Activated CD4-positive, alpha-beta T cell treated with anti-CD3 and anti-CD28 coated beads, Interleukin-2, amount 10 ng/mL, durations not matched to agents 7 days and 5 days (primary cell): ENCODE measurements at regions of chr2 and their contacts with region 1.

Region 1: DNA sequence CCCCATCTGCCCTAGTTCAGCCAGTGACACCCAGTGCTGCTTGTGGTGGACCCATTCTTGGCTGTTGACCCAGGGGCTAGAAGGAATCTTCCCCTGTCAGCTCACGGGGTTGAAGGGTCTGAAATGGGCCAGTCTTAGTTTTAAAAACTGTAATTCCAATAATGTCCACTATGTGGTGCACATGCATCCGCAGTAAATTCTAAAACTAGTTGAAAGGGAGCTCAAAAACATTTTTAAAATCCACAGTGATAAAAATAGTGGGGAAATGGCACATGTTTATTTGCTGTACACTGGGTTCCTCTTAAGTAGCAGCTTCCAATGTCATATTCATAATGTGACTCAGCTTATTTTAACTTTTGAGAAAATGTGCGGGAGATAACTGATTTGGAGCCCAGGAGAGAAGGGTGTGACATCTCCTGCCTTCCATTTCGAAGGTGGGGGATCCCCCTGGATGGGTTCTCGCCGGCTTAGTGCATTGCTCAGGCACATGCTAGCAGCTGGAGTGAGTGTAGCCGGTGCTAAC is 32.8 kb downstream of the GRHL1 start:
- DNase-seq: peak; percentile 35
- H3K4me3 Mint-ChIP-seq: no peak overlapping the region
- H3K27ac Mint-ChIP-seq: no peak overlapping the region
- H3K4me1 Mint-ChIP-seq: peaks cover 15% of the 10 kb centered on the region
- H3K27me3 Mint-ChIP-seq: peaks cover 26% of the 10 kb centered on the region

Region 2: GRCh38 chr2:9951973-9952737 is 32.1 kb before region 1 on chr2:
- CTCF ChIA-PET with region 1: no interaction called
- POLR2A ChIA-PET with region 1: interaction called, 12 read pairs
- DNase-seq: no peak
- H3K4me3 Mint-ChIP-seq: peak overlapping the region; percentile 72
- H3K27ac Mint-ChIP-seq: no peak overlapping the region
- H3K4me1 Mint-ChIP-seq: peaks cover 11% of the 10 kb centered on the region
- H3K27me3 Mint-ChIP-seq: peaks cover 52% of the 10 kb centered on the region

Region 3: GRCh38 chr2:10006236-10007161 is 22.2 kb after region 1 on chr2:
- CTCF ChIA-PET with region 1: interaction called, 10 read pairs
- POLR2A ChIA-PET with region 1: interaction called, 3 read pairs
- DNase-seq: no peak
- H3K4me3 Mint-ChIP-seq: no peak overlapping the region
- H3K27ac Mint-ChIP-seq: no peak overlapping the region
- H3K4me1 Mint-ChIP-seq: no peaks in the 10 kb centered on the region
- H3K27me3 Mint-ChIP-seq: peaks cover 27% of the 10 kb centered on the region

Region 4: GRCh38 chr2:10048501-10049171 is 64.4 kb after region 1 on chr2:
- CTCF ChIA-PET with region 1: interaction called, 18 read pairs
- POLR2A ChIA-PET with region 1: interaction called, 4 read pairs
- DNase-seq: peak; percentile 54
- H3K4me3 Mint-ChIP-seq: no peak overlapping the region
- H3K27ac Mint-ChIP-seq: no peak overlapping the region
- H3K4me1 Mint-ChIP-seq: peaks cover 19% of the 10 kb centered on the region
- H3K27me3 Mint-ChIP-seq: no peaks in the 10 kb centered on the region

Region 5: DNA sequence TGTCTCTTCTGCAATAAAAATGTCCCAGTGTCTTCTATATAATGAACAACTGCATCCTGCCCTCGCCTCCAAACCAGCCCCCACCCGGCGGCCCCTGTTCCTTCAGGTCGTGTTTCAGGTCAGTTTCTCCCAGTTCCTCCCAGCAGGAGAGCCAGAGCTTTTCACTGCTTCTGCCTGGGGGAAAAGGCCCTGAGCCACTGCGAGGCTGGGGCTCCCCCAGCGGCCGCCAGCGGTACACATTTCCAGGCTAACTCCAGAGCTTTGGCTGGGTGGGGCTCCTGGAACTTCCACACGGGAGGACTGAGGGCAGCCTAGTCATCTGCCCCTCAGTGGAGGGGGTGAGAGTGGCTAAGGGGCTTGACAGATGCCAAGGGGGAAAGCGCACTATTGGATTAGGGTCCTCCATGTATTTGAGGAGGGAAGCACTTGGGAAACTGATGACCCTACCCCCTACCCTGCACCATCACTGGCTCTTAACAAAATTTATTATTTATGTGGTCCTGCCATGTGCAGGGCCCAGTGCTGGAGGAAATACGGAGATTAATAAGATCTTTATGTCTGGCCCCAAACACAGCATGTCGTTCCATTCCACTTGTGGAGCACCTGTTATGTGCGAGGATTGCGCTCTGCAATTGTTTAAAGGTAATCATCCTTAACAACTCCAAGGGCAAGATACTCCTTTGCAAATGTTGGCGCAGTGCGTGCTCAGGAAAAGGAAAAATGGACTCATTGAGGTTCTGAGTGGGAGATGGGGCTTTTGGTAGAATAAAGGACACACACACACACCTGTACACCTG is 113.3 kb after region 1 on chr2:
- CTCF ChIA-PET with region 1: no interaction called
- POLR2A ChIA-PET with region 1: no interaction called
- DNase-seq: peak; percentile 37
- H3K4me3 Mint-ChIP-seq: no peak overlapping the region
- H3K27ac Mint-ChIP-seq: no peak overlapping the region
- H3K4me1 Mint-ChIP-seq: peaks cover 7% of the 10 kb centered on the region
- H3K27me3 Mint-ChIP-seq: peaks cover 44% of the 10 kb centered on the region